ENCODE measurements at regions of chr17 and their contacts with region 1.

Region 1: GRCh38 chr17:56319517-56319916 is 166.2 kb downstream of the ANKFN1 start:
- DNase-seq: no peak
- ATAC-seq: peak; percentile 66
- H3K4me3 Mint-ChIP-seq: no peak overlapping the region
- H3K27ac Mint-ChIP-seq: no peak overlapping the region
- H3K4me1 Mint-ChIP-seq: no peaks in the 10 kb centered on the region
- H3K27me3 Mint-ChIP-seq: no peaks in the 10 kb centered on the region

Region 2: DNA sequence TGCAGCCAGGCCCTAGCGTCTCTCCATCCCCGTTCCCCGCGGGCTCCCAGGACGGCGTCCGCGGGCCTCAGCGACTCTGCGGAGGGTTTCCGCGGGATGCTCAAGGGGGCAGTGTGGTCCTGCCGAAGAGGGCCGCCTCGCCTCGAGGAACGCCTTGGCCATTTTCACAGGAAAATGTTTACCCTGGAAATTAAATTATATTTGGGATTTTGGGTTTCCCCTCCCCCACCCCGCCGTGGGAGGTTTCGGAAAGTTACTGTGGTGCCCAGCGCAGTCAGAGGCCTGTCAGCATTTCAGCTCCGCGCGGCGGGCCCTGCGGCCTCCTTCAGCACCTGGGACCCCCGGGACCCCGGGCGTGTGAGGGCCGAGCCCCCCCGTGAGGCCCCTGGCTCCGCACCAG is 474.1 kb before region 1 on chr17:
- CTCF ChIA-PET with region 1: no interaction called
- POLR2A ChIA-PET with region 1: no interaction called
- intact Hi-C with region 1: loop called (anchors 1 to 2 kb)
- DNase-seq: peak; percentile 55
- ATAC-seq: peak; percentile 53
- H3K4me3 Mint-ChIP-seq: no peak overlapping the region
- H3K27ac Mint-ChIP-seq: no peak overlapping the region
- H3K4me1 Mint-ChIP-seq: peaks cover 3% of the 10 kb centered on the region
- H3K27me3 Mint-ChIP-seq: peaks cover 7% of the 10 kb centered on the region

Region 3: GRCh38 chr17:55996825-55997224 is 322.7 kb before region 1 on chr17:
- CTCF ChIA-PET with region 1: no interaction called
- POLR2A ChIA-PET with region 1: no interaction called
- intact Hi-C with region 1: loop called in 1 of 2 experiments (anchors 5 kb)
- DNase-seq: no peak
- ATAC-seq: no peak
- H3K4me3 Mint-ChIP-seq: no peak overlapping the region
- H3K27ac Mint-ChIP-seq: no peak overlapping the region
- H3K4me1 Mint-ChIP-seq: peaks cover 3% of the 10 kb centered on the region
- H3K27me3 Mint-ChIP-seq: peaks cover 6% of the 10 kb centered on the region

Region 4: GRCh38 chr17:56125830-56126819 is 193.4 kb before region 1 on chr17:
- CTCF ChIA-PET with region 1: interaction called, 3 read pairs
- POLR2A ChIA-PET with region 1: interaction called, 3 read pairs
- intact Hi-C with region 1: loop called (anchors 2 to 5 kb)
- DNase-seq: peak; percentile 13
- ATAC-seq: no peak
- H3K4me3 Mint-ChIP-seq: no peak overlapping the region
- H3K27ac Mint-ChIP-seq: no peak overlapping the region
- H3K4me1 Mint-ChIP-seq: no peaks in the 10 kb centered on the region
- H3K27me3 Mint-ChIP-seq: no peaks in the 10 kb centered on the region

Region 5: DNA sequence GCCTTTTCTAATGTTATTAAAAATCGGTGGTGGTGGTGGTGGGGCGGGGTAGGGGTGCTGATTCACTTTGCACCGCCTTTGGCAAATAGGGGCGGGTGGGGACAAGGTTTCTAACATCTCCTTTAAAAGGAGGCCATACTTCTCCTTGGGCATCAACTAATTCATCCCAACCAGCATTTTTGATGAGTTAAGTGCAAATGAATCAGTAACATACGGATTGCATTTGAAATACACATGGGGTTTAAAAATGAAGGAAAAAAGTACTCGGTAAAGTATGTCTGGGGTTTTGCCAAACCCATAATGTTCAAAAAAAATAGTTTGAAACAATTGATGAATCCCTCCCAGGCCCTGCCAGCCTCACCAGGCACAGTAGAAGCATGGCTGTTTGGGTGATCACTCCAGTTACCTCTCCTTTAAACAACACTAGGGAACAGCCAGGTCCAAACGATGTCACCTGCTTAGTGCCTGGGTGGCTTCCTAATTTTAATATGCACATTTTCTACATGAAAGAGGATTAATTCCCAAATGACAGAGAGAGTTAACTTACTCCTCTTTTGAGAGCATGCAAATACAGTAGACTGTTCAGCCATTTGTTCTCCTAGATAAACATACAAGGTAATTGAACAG is 59.0 kb before region 1 on chr17:
- CTCF ChIA-PET with region 1: no interaction called
- POLR2A ChIA-PET with region 1: no interaction called
- intact Hi-C with region 1: no loop called
- DNase-seq: no peak
- ATAC-seq: no peak
- H3K4me3 Mint-ChIP-seq: no peak overlapping the region
- H3K27ac Mint-ChIP-seq: no peak overlapping the region
- H3K4me1 Mint-ChIP-seq: no peaks in the 10 kb centered on the region
- H3K27me3 Mint-ChIP-seq: peaks cover 5% of the 10 kb centered on the region